Stomach (tissue), 19 donors: ENCODE measurements at regions of chr7 and their contacts with region 1.

Region 1: DNA sequence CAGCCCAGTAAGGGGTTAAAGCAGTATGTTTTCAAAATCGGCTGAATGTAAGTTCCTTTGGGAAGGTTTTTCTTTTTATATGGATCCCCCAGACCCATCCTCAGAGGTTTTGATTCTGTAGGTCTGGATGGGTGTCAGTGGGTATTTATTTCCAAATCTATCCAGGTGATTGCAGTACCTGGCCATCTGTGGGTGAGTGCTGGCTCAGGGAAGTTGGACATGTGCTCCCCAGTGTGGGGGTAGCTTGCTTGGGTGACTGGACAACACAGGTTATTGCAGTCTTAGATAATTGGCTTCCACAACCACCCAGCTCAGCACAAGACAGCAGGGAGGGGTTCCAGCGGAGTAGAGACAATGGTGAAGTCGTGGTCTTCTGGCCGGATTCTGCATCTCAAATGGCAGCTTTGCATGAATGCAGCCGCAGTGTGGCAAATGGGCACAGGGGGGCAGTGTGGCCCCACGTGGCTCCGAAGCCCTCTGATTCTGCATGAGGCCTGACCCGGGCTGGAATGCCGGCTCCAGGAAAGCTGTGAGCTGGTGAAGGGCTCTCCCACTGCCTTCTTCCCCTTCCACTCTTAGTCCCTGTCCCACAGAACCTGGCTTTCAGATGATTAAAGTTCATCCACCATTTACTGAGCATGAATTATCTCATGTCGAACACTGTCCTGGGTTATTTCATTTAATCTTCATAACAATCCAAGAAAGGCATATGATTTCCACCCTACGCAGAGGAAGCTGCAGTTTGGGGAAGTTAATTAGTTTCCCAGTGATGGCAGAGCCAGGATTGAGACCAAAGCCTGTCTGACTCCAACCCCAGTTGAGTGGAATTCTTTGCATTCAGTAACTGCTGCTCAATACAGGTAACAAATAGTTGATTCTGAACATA is 64.5 kb upstream of the SYPL1 start:
- DNase-seq: peak; percentile 90 to 92
- H3K4me3 ChIP-seq: no peak overlapping the region
- H3K27ac ChIP-seq: peak overlapping the region in 3 of 5 donors; percentile 3 to 39 (median 38)
- H3K4me1 ChIP-seq: peaks cover 0 to 40% (median 25%) of the 10 kb centered on the region in 4 donors
- H3K27me3 ChIP-seq: peaks cover 0 to 4% (median 0%) of the 10 kb centered on the region in 3 donors
- CTCF ChIP-seq: peak in 5 of 7 experiments; percentile 85 to 98 (median 93)
- EP300 ChIP-seq: no peak
- POLR2A ChIP-seq: no peak

Region 2: GRCh38 chr7:106153891-106154449 is 22.7 kb before region 1 on chr7:
- intact Hi-C with region 1: no loop called
- DNase-seq: peak; percentile 86 to 93
- H3K4me3 ChIP-seq: no peak overlapping the region
- H3K27ac ChIP-seq: no peak overlapping the region
- H3K4me1 ChIP-seq: peaks cover 0 to 20% (median 10%) of the 10 kb centered on the region in 4 donors
- H3K27me3 ChIP-seq: no peaks in the 10 kb centered on the region
- CTCF ChIP-seq: peak in 5 of 7 experiments; percentile 86 to 97 (median 88)
- EP300 ChIP-seq: no peak
- POLR2A ChIP-seq: no peak

Region 3: DNA sequence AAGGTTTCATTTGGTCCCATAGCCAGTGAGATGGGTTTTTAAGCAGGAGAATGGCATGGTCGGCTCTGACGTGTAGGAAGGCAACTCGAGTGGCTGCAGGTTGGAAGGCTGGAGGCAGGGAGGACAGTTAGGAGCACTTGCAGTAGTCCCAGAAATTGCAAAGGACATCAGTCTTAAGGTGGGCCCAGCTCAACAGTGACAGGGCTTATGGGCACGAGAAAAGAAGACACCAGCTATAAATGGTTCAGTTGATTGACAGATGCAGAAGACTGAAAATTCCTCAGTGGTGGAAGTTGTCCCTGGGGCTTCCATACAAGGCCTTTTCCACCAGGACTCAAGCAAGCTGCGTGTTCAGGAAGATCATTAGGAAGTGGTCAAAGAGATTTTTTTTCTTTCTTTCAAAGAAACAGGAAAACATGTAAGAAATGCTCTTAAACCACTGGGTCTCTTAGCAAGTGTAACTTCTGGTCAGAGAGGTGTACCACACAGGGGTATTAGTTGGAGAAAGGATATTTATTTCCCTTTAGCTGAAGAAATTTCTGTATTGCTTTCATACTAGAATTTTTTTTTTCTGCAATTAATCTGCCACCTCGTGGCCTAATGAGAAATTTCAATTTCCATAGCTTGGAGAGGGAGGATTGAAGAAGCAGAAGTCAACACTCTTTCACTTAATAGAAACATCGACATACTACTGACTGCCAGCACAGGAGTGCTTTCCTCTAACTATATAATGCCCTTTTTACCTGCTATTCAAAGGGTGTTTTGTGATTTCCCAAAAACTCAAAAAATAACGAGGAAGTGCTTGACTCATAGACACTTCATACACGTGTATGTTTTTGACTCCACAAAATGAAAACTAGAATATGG is 285.6 kb after region 1 on chr7:
- intact Hi-C with region 1: loop called (anchors 5 kb)
- DNase-seq: peak in 1 of 2 donors; percentile 60
- H3K4me3 ChIP-seq: no peak overlapping the region
- H3K27ac ChIP-seq: no peak overlapping the region
- H3K4me1 ChIP-seq: peaks cover 6 to 51% (median 26%) of the 10 kb centered on the region in 4 donors
- H3K27me3 ChIP-seq: no peaks in the 10 kb centered on the region
- CTCF ChIP-seq: peak in 5 of 7 experiments; percentile 50 to 78 (median 54)
- EP300 ChIP-seq: no peak
- POLR2A ChIP-seq: no peak

Region 4: DNA sequence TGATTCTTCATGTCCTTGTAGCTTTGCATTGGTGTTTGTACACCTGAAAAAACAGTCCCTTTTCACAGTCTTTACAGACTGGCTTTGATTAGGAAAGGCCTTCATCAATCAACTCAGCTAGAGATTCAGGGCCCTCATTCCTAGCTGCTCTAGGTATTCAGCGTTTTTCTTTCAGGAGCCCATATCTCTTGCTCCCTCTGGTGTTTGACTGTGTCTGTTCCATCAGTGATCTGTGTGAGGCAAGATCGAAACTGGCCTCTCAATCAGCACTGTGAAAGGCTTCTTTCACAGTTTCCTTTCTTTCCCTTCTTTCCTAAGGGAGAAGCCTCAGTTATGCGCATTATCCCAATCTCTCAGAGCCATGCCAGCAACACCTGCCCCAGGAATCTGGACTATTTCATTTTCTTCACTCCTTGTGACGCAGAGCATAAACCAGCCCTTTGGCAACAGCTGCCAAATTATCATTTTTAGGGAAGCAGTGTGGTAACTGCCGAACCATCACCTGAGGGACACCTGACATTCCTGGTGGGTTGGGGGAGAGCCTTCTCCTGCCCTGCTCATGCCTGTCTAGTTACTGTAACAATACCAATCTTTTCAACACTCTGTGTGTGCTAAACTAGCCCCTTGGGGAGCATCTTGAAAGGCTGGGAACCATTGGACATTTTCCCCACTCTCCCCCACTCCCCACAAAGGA is 560.0 kb after region 1 on chr7:
- intact Hi-C with region 1: loop called (anchors 10 kb)
- DNase-seq: peak; percentile 37 to 68
- H3K4me3 ChIP-seq: no peak overlapping the region
- H3K27ac ChIP-seq: no peak overlapping the region
- H3K4me1 ChIP-seq: peaks cover 0 to 16% (median 5%) of the 10 kb centered on the region in 4 donors
- H3K27me3 ChIP-seq: no peaks in the 10 kb centered on the region
- CTCF ChIP-seq: peak in 5 of 7 experiments; percentile 33 to 70 (median 57)
- EP300 ChIP-seq: no peak
- POLR2A ChIP-seq: no peak